PC-9 (cell line): ENCODE measurements at regions of chr15 and their contacts with region 1.

Region 1: GRCh38 chr15:94607176-94607654 is 375.9 kb downstream of the MCTP2 start:
- DNase-seq: no peak
- H3K4me3 ChIP-seq: no peak overlapping the region
- H3K27ac ChIP-seq: no peak overlapping the region
- H3K4me1 ChIP-seq: no peaks in the 10 kb centered on the region
- H3K27me3 ChIP-seq: peaks cover 14% of the 10 kb centered on the region; the same call in 1 of the 2 replicates
- CTCF ChIP-seq: no peak

Region 2: GRCh38 chr15:94485148-94485719 is 122.0 kb before region 1 on chr15:
- CTCF ChIA-PET with region 1: interaction called, 12 read pairs
- POLR2A ChIA-PET with region 1: no interaction called
- intact Hi-C with region 1: no loop called
- DNase-seq: no peak
- H3K4me3 ChIP-seq: no peak overlapping the region
- H3K27ac ChIP-seq: no peak overlapping the region
- H3K4me1 ChIP-seq: no peaks in the 10 kb centered on the region
- H3K27me3 ChIP-seq: no peaks in the 10 kb centered on the region
- CTCF ChIP-seq: no peak

Region 3: DNA sequence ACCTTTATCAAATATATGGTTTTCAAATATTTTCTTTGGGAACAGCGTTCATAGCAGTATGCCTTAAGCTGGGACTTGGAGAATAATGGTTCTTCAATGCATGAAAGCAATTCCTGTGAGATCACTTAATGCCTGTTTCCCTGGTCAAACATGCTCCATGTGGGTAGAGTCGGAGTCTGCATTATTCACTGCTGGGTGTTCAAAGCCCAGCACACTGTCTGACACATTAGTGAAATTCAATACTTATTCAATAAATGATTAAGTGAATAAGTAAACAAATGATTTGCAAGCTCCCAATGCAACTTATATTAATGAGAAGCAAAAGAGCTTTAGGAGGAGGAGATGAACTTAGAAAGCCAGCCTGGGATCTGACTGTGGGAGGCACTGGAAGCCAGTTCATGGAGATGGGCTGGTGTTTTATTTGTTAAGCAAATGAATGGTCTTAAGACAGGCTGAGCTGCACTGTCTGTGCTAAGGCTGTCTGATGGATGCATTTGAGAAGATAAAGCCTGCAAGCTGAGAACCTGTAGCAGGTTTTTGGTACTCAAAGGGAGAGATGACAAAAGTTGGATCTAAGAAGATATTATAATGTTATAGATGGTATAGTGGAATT is 114.9 kb after region 1 on chr15:
- CTCF ChIA-PET with region 1: no interaction called
- POLR2A ChIA-PET with region 1: no interaction called
- intact Hi-C with region 1: no loop called
- DNase-seq: no peak
- H3K4me3 ChIP-seq: no peak overlapping the region
- H3K27ac ChIP-seq: no peak overlapping the region
- H3K4me1 ChIP-seq: no peaks in the 10 kb centered on the region
- H3K27me3 ChIP-seq: no peaks in the 10 kb centered on the region
- CTCF ChIP-seq: no peak